ENCODE measurements at regions of chr15 and their contacts with region 1.

Region 1: GRCh38 chr15:70488002-70488605 is 275.3 kb downstream of the UACA start:
- DNase-seq: peak; percentile 84
- ATAC-seq: no peak
- H3K4me3 Mint-ChIP-seq: no peak overlapping the region
- H3K27ac Mint-ChIP-seq: no peak overlapping the region
- H3K4me1 Mint-ChIP-seq: peaks cover 57% of the 10 kb centered on the region
- H3K27me3 Mint-ChIP-seq: peaks cover 31% of the 10 kb centered on the region

Region 2: DNA sequence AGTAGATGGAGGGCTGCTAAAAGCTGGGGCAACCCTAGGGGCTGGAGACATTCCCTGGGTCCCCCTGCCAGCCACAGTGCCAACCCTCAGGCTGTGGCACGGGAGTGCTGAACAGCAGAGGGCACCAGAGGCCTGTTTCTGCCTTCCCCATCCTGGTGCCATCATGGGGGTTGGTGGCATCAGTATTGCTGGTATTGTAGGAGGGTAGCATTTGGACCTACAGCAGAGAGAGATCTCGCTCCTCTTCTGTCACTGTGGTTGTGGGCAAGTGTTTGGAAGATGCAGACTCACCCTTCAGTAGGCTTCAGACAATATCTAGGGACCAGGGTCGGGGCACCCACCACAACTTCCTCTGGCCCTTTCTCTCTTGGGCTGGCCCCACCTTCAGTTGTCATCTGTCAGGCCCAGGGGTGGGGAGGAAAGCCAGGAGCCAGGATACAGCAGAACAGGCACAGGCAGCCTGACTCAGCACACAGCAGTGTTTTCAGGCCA is 912.0 kb before region 1 on chr15:
- CTCF ChIA-PET with region 1: no interaction called
- POLR2A ChIA-PET with region 1: no interaction called
- intact Hi-C with region 1: loop called in 1 of 2 experiments (anchors 1 kb)
- DNase-seq: peak; percentile 85
- ATAC-seq: peak; percentile 59
- H3K4me3 Mint-ChIP-seq: no peak overlapping the region
- H3K27ac Mint-ChIP-seq: peak overlapping the region; percentile 16
- H3K4me1 Mint-ChIP-seq: peaks cover 37% of the 10 kb centered on the region
- H3K27me3 Mint-ChIP-seq: no peaks in the 10 kb centered on the region

Region 3: DNA sequence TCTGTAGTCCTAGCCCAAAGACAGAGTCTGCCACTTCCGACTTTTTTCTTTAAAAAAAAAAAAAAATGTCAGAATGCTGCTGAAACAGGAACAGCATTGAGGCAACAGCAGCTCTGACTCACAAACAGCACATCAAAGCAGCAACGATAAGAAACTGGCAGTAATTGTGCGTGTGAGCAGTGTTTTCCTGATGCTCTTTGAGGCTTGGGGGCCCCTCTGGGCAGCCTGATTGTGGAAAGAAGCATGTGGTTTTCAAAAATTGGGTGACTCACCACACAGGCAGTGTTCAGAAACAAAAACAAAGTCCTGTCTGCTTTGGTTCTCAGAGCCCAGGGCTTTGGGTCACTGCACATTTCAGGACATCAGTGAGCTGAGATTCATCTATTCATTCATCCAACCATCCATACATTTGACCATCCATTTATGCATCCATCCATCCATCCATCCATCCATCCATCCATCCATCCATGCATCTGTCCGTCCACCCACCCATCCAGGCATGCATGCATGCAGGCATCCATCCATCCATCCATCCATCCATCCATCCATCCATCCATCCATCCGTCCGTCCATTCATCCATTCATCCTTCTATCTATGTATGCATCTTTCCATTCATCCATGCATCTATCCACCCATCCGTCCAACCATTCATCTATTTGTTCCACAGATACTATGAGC is 727.1 kb before region 1 on chr15:
- CTCF ChIA-PET with region 1: interaction called, 3 read pairs
- POLR2A ChIA-PET with region 1: interaction called, 7 read pairs
- intact Hi-C with region 1: loop called (anchors 1 kb)
- DNase-seq: peak; percentile 89
- ATAC-seq: peak; percentile 42
- H3K4me3 Mint-ChIP-seq: peak overlapping the region; percentile 25
- H3K27ac Mint-ChIP-seq: peak overlapping the region; percentile 94
- H3K4me1 Mint-ChIP-seq: peaks cover 72% of the 10 kb centered on the region
- H3K27me3 Mint-ChIP-seq: no peaks in the 10 kb centered on the region

Region 4: DNA sequence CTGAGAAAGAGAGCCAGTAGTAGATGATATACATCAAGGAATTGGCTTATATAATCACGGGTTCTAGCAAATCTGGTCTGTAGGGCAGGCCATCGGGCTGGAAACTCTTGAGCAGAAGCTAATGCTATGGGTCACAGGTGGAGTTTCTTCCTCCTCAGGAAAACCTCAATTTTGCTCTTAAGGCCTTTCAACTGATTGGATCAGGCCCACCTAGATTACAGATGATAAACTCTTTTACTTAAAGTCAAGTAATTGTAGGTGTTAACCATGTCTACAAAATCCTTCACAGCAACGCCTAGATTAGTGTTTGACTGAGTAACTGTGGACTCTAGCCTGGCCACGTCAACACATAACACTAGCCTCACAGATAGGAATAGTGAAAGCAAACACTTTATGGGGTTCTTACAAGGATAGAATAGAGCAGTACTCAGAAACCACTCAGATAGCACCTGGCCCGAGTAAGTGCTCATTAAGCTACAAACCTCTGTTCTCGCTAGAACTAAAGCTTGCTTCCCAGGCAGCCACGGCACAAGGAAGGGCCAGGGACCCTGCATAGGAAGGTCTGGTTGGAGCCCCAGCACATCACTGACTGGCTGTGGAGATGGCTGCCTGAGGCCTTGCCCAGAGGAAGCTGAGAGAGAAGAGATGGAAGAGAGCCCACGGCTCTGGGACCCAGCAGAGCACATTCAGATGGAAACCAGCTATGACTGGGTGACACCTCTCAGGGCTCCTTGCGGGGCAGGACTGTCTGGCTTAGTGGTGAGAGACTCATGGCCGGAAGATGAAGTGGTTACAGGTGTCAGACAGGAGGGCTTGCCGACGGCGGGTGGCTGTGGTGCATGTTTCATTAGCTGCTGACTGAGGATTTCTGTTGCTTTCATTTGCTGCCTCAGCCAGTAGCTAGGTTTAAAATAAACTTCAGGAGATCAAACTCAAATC is 187.9 kb before region 1 on chr15:
- CTCF ChIA-PET with region 1: no interaction called
- POLR2A ChIA-PET with region 1: no interaction called
- intact Hi-C with region 1: loop called (anchors 2 to 5 kb)
- DNase-seq: peak; percentile 89
- ATAC-seq: peak; percentile 100
- H3K4me3 Mint-ChIP-seq: no peak overlapping the region
- H3K27ac Mint-ChIP-seq: no peak overlapping the region
- H3K4me1 Mint-ChIP-seq: peaks cover 11% of the 10 kb centered on the region
- H3K27me3 Mint-ChIP-seq: no peaks in the 10 kb centered on the region

Region 5: GRCh38 chr15:70474471-70475396 is 13.4 kb before region 1 on chr15:
- CTCF ChIA-PET with region 1: interaction called, 6 read pairs
- POLR2A ChIA-PET with region 1: interaction called, 3 read pairs
- intact Hi-C with region 1: loop called in 1 of 2 experiments (anchors 2 kb)
- DNase-seq: peak; percentile 54
- ATAC-seq: peak; percentile 42
- H3K4me3 Mint-ChIP-seq: no peak overlapping the region
- H3K27ac Mint-ChIP-seq: no peak overlapping the region
- H3K4me1 Mint-ChIP-seq: peaks cover 27% of the 10 kb centered on the region
- H3K27me3 Mint-ChIP-seq: peaks cover 34% of the 10 kb centered on the region

Region 6: GRCh38 chr15:70545526-70545925 is 57.4 kb after region 1 on chr15:
- CTCF ChIA-PET with region 1: no interaction called
- POLR2A ChIA-PET with region 1: no interaction called
- intact Hi-C with region 1: loop called (anchors 1 to 5 kb)
- DNase-seq: no peak
- ATAC-seq: no peak
- H3K4me3 Mint-ChIP-seq: no peak overlapping the region
- H3K27ac Mint-ChIP-seq: peak overlapping the region; percentile 84
- H3K4me1 Mint-ChIP-seq: peaks cover 51% of the 10 kb centered on the region
- H3K27me3 Mint-ChIP-seq: no peaks in the 10 kb centered on the region